Natural killer cell (primary cell): ENCODE measurements at regions of chr17 and their contacts with region 1.

Region 1: DNA sequence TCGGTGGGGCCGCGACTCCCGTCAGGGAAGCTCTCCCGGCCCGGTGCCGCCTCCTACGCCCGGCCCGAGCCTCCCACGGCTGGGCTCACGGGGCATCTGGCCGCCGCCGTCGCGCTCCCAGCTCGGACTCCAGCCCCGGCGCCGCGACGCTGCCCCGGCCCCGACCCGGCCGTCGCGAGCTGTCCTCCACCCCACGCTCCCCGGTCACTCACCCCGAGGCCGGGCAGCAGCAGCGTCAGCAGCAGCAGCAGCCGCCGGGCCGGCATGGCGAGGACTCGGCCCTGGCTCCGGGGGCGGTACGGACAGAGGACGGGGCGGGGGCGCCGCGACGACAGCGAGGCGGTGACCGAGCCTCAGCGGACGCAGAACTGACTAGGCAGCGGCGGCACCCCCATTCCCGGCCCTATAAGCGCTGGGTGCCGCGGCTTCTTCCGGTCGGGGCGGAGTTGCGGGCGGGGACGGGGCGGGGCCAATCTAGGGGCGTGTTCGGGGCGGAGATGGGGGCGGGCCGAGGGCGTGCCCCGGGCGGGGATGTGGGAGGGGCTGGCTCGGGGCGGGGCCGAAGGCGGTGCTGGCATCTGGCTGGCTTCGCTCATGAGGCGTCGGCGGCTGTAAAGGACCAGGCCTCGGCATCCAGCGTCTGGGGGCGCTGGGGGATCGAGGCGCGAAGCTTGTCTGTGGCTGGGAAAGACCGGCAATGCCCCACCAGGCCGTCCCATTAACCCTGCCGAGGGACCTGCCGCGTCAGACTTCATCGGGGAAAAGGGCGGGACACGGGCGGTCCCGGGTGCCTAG is at the start of gene ERN1:
- DNase-seq: peak; percentile 90 to 93
- ATAC-seq: peak; percentile 88 to 97 (median 89)
- H3K4me3 ChIP-seq: peak within 1 kb of the TSS; percentile 50
- H3K4me3 Mint-ChIP-seq: peak within 1 kb of the TSS; percentile 92
- H3K27ac ChIP-seq: peak within 1 kb of the TSS; percentile 84
- H3K27ac Mint-ChIP-seq: peak within 1 kb of the TSS; percentile 88 to 91
- H3K4me1 ChIP-seq: peaks cover 16% of the 10 kb centered on the region
- H3K4me1 Mint-ChIP-seq: peaks cover 34 to 48% of the 10 kb centered on the region in 2 donors
- H3K27me3 ChIP-seq: no peaks in the 10 kb centered on the region
- H3K27me3 Mint-ChIP-seq: no peaks in the 10 kb centered on the region
- CTCF ChIP-seq: no peak
- total RNA-seq, gene ERN1: 52.9 to 90.5 (median 67.2) TPM

Region 2: GRCh38 chr17:64063766-64064224 is 66.2 kb before region 1 on chr17:
- intact Hi-C with region 1: loop called (anchors 1 kb)
- DNase-seq: peak; percentile 53 to 70
- ATAC-seq: peak; percentile 43 to 62 (median 57)
- H3K4me3 ChIP-seq: peak overlapping the region; percentile 1
- H3K4me3 Mint-ChIP-seq: peak overlapping the region; percentile 59
- H3K27ac ChIP-seq: peak overlapping the region; percentile 84
- H3K27ac Mint-ChIP-seq: peak overlapping the region; percentile 90 to 97
- H3K4me1 ChIP-seq: peaks cover 83% of the 10 kb centered on the region
- H3K4me1 Mint-ChIP-seq: peaks cover 49 to 98% of the 10 kb centered on the region in 2 donors
- H3K27me3 ChIP-seq: no peaks in the 10 kb centered on the region
- H3K27me3 Mint-ChIP-seq: no peaks in the 10 kb centered on the region
- CTCF ChIP-seq: peak; percentile 40

Region 3: GRCh38 chr17:64281962-64282727 is 152.2 kb after region 1 on chr17:
- intact Hi-C with region 1: no loop called
- DNase-seq: peak; percentile 26 to 83
- ATAC-seq: peak; percentile 59 to 85 (median 82)
- H3K4me3 ChIP-seq: no peak overlapping the region
- H3K4me3 Mint-ChIP-seq: no peak overlapping the region
- H3K27ac ChIP-seq: no peak overlapping the region
- H3K27ac Mint-ChIP-seq: no peak overlapping the region
- H3K4me1 ChIP-seq: no peaks in the 10 kb centered on the region
- H3K4me1 Mint-ChIP-seq: no peaks in the 10 kb centered on the region
- H3K27me3 ChIP-seq: no peaks in the 10 kb centered on the region
- H3K27me3 Mint-ChIP-seq: no peaks in the 10 kb centered on the region
- CTCF ChIP-seq: peak; percentile 71